ENCODE measurements at regions of chr1 and their contacts with region 1.

Region 1: GRCh38 chr1:225474986-225475820 is 47.4 kb upstream of the LBR start:
- DNase-seq: peak; percentile 85
- H3K4me3 Mint-ChIP-seq: no peak overlapping the region
- H3K27ac Mint-ChIP-seq: no peak overlapping the region
- H3K4me1 Mint-ChIP-seq: no peaks in the 10 kb centered on the region
- H3K27me3 Mint-ChIP-seq: no peaks in the 10 kb centered on the region
- CTCF ChIP-seq: peak; percentile 100

Region 2: DNA sequence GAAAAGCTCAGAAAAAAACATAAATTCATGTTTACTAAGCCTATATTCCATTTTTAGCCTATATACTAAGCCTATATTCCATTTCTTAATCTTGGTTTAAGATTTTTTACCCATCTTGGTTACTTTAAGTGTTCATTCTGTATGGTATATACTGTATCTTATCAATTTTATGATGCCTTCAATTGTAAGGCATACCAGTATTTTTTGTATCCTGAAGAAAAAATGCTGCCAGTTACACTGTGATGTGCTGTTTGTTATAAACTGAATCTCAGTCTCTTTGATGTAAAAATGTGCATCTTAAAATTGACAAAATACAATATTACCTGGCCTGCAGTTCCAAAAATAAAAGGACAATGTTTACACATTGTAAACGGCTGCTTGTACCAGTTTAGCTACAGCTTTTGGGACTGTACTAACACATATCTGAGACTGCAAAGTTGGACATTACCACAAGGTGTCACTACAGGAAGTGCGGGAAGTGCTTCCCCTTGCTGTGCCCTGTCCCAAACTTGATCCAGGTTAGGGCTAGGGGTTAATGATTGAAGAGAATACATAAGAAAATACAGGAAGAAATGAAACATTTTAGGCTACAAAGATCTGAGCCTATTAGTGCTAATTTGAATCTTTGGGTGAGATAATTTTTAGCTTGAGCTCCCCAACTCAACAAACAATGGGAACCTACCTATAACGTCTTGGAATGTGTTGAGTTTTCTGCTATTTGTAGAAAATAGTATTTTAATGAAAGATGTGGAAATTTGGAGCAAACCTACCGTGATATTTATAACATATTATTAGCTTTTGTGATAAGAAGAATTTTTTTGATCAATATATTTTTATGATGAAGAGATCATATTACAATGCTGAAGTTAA is 156.3 kb before region 1 on chr1:
- CTCF ChIA-PET with region 1: interaction called, 9 read pairs
- POLR2A ChIA-PET with region 1: no interaction called
- intact Hi-C with region 1: loop called (anchors 1 kb)
- DNase-seq: peak; percentile 85
- H3K4me3 Mint-ChIP-seq: no peak overlapping the region
- H3K27ac Mint-ChIP-seq: no peak overlapping the region
- H3K4me1 Mint-ChIP-seq: no peaks in the 10 kb centered on the region
- H3K27me3 Mint-ChIP-seq: no peaks in the 10 kb centered on the region
- CTCF ChIP-seq: peak; percentile 97

Region 3: DNA sequence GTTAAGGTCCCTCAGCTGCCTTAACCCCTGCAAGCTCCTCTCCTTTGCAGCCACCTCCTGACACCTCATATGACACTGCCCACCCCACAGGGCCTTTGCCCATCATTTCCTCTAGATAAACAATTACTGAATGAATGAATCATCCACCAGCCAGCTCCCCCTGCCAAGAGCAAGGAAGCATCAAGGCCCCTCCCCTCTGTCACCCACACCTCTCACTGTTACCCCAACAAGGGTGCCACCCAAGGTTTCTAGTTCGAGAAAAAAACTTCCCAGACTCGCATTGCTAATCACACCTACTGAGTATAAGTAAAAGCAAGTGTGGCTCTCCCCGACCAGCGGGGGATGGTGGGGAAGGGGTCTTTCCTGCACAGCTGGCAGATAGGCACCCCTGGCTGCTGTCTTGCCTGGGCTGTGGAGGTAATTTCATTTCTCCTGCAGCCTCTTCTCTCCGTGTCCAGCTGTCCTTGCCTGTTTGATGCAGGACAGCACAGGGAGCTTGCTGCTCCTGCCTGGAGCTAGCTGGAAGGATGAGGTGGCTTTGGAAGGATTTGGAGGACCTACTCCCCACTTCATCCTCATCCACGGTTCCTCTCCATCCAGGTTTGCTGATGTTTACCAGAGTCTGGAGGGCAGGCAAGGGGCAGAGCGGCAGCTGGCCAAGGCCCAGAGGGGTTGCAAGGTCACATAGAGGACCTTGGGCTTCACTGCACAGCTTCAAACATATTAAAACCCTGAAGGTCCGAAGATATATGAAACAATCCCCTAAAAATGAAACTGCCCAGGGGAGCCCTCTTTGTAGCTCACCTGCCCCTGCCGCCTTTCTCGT is 14.3 kb before region 1 on chr1:
- CTCF ChIA-PET with region 1: interaction called, 78 read pairs
- POLR2A ChIA-PET with region 1: interaction called, 11 read pairs
- intact Hi-C with region 1: no loop called
- DNase-seq: peak; percentile 84
- H3K4me3 Mint-ChIP-seq: no peak overlapping the region
- H3K27ac Mint-ChIP-seq: no peak overlapping the region
- H3K4me1 Mint-ChIP-seq: peaks cover 70% of the 10 kb centered on the region
- H3K27me3 Mint-ChIP-seq: no peaks in the 10 kb centered on the region
- CTCF ChIP-seq: no peak

Region 4: DNA sequence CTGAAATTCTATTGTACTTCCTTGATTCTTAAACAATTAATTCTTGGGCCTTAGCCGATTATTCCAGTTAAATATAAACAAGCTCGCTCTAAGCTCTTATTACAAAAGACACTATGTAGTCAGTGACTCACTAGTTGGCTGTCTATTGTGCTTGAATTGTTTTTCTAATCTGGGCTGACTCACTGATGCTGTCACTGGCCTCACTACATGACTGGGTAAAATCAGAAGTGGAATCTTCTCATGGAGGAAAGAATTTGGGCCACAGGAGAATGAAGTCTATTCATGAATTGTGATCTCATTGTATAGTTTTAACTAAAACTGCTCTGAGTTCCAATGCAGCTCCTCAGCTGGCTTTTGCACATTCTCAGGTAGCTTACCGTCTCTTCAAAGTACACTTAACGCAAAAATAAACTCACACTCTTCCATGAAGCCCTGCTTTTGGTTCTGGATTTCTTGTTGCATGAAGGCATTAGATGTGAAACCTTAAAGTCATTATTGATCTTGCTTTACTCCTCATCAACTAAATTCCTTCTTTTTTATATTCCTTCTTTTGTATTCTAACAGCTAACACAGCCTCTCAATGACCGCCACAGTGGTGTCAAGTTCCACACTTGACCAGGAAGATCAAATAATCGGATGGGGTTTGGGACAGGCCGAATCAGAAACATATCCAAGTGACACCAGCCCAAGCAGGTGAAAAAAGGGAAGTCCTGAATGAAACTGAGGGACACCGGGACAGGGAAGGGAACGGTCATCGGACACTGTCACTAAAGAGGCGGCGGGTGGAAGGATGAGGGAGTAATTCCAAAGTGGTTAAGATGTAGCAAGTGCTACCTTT is 33.6 kb after region 1 on chr1:
- CTCF ChIA-PET with region 1: interaction called, 34 read pairs
- POLR2A ChIA-PET with region 1: interaction called, 27 read pairs
- intact Hi-C with region 1: no loop called
- DNase-seq: peak; percentile 99
- H3K4me3 Mint-ChIP-seq: no peak overlapping the region
- H3K27ac Mint-ChIP-seq: peak overlapping the region; percentile 83
- H3K4me1 Mint-ChIP-seq: peaks cover 32% of the 10 kb centered on the region
- H3K27me3 Mint-ChIP-seq: no peaks in the 10 kb centered on the region
- CTCF ChIP-seq: no peak

Region 5: DNA sequence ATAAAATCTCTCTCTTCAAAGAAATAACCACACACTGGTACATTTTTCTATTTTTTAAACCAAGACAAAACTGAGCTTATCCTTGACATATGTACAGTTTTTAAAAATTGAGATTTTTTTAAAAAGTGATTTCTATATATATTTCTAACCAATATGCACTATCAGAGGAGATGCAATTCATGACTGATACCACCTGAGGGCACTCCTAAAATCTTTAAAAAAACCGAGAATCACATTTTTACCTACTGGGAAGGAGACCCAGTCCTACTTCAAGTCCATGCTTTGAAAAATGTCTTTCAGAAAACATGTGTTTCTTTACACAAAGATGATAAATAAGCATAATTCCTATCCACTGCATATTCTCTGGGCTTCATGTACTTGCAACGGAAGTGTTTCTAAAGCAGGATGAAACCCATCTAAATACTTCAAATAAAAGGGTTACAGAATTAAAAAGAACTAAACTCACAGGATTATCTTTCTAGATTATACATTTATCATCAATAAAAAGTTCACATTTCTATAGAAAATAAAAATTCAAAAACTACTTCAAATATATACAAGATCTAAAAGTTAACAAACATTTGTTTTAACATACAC is 79.1 kb after region 1 on chr1:
- CTCF ChIA-PET with region 1: interaction called, 43 read pairs
- POLR2A ChIA-PET with region 1: no interaction called
- intact Hi-C with region 1: loop called (anchors 1 kb)
- DNase-seq: peak; percentile 67
- H3K4me3 Mint-ChIP-seq: no peak overlapping the region
- H3K27ac Mint-ChIP-seq: no peak overlapping the region
- H3K4me1 Mint-ChIP-seq: peaks cover 2% of the 10 kb centered on the region
- H3K27me3 Mint-ChIP-seq: no peaks in the 10 kb centered on the region
- CTCF ChIP-seq: peak; percentile 85

Region 6: GRCh38 chr1:225845571-225846259 is 370.5 kb after region 1 on chr1:
- CTCF ChIA-PET with region 1: interaction called, 58 read pairs
- POLR2A ChIA-PET with region 1: interaction called, 3 read pairs
- intact Hi-C with region 1: loop called (anchors 1 kb)
- DNase-seq: peak; percentile 95
- H3K4me3 Mint-ChIP-seq: no peak overlapping the region
- H3K27ac Mint-ChIP-seq: no peak overlapping the region
- H3K4me1 Mint-ChIP-seq: no peaks in the 10 kb centered on the region
- H3K27me3 Mint-ChIP-seq: no peaks in the 10 kb centered on the region
- CTCF ChIP-seq: peak; percentile 97

Region 7: GRCh38 chr1:225977937-225978748 is 502.9 kb after region 1 on chr1:
- CTCF ChIA-PET with region 1: interaction called, 572 read pairs
- POLR2A ChIA-PET with region 1: no interaction called
- intact Hi-C with region 1: loop called (anchors 1 kb)
- DNase-seq: no peak
- H3K4me3 Mint-ChIP-seq: no peak overlapping the region
- H3K27ac Mint-ChIP-seq: no peak overlapping the region
- H3K4me1 Mint-ChIP-seq: peaks cover 5% of the 10 kb centered on the region
- H3K27me3 Mint-ChIP-seq: no peaks in the 10 kb centered on the region
- CTCF ChIP-seq: no peak